ENCODE measurements at regions of chr2 and their contacts with region 1.

Region 1: GRCh38 chr2:64144057-64145013 is at the start of gene PELI1:
- DNase-seq: peak; percentile 82 to 95 (median 88)
- ATAC-seq: peak; percentile 97
- H3K4me3 ChIP-seq: peak within 1 kb of the TSS; percentile 88
- H3K4me3 Mint-ChIP-seq: peak within 1 kb of the TSS in 9 of 10 donors; percentile 87 to 98 (median 93)
- H3K27ac ChIP-seq: peak within 1 kb of the TSS; percentile 98
- H3K27ac Mint-ChIP-seq: peak within 1 kb of the TSS; percentile 93 to 99 (median 96)
- H3K4me1 ChIP-seq: peaks cover 11 to 24% of the 10 kb centered on the region in 2 donors
- H3K4me1 Mint-ChIP-seq: peaks cover 19 to 33% (median 31%) of the 10 kb centered on the region in 7 donors
- H3K27me3 ChIP-seq: no peaks in the 10 kb centered on the region
- H3K27me3 Mint-ChIP-seq: no peaks in the 10 kb centered on the region
- total RNA-seq, gene PELI1: 33.4 to 170 (median 57.2) TPM

Region 2: GRCh38 chr2:63841254-63842022 is 302.9 kb before region 1 on chr2 and contains the start of gene UGP2:
- CTCF ChIA-PET with region 1: no interaction called
- POLR2A ChIA-PET with region 1: no interaction called
- intact Hi-C with region 1: loop called (anchors 1 to 2 kb)
- DNase-seq: peak; percentile 68 to 89 (median 83)
- ATAC-seq: peak; percentile 77
- H3K4me3 ChIP-seq: peak within 1 kb of the TSS; percentile 82
- H3K4me3 Mint-ChIP-seq: peak within 1 kb of the TSS; percentile 97 to 100 (median 99)
- H3K27ac ChIP-seq: peak within 1 kb of the TSS; percentile 90
- H3K27ac Mint-ChIP-seq: peak within 1 kb of the TSS; percentile 95 to 99 (median 97)
- H3K4me1 ChIP-seq: peaks cover 5 to 24% of the 10 kb centered on the region in 2 donors
- H3K4me1 Mint-ChIP-seq: peaks cover 27 to 60% (median 53%) of the 10 kb centered on the region in 7 donors
- H3K27me3 ChIP-seq: no peaks in the 10 kb centered on the region
- H3K27me3 Mint-ChIP-seq: peaks cover 0 to 14% (median 0%) of the 10 kb centered on the region in 5 donors
- total RNA-seq, gene UGP2: 69.5 to 134 (median 92.4) TPM

Region 3: DNA sequence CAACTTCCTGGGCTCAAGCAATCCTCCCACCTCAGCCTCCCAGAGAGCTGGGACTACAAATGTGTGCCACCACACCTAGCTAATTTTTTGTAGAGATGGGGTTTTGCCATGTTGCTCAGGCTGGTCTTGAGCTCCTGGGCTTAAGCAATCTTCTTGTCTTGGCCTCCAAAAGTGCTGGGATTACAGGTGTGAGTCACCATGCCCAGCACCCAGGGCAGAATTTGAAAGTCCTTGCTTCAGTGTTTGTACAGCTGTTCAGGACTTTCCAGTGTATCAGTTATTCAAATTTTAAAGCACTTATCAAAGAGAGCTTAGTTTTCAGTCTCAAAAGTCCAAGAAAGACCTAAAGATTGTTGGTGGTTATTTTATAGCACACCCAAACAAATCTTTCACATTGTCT is 81.5 kb before region 1 on chr2:
- CTCF ChIA-PET with region 1: no interaction called
- POLR2A ChIA-PET with region 1: interaction called, 4 read pairs
- intact Hi-C with region 1: loop called in 1 of 2 experiments (anchors 1 kb)
- DNase-seq: no peak
- ATAC-seq: no peak
- H3K4me3 ChIP-seq: no peak overlapping the region
- H3K4me3 Mint-ChIP-seq: no peak overlapping the region
- H3K27ac ChIP-seq: no peak overlapping the region
- H3K27ac Mint-ChIP-seq: peak overlapping the region in 8 of 9 donors; percentile 83 to 97 (median 92)
- H3K4me1 ChIP-seq: peaks cover 0 to 22% of the 10 kb centered on the region in 2 donors
- H3K4me1 Mint-ChIP-seq: peaks cover 15 to 46% (median 31%) of the 10 kb centered on the region in 7 donors
- H3K27me3 ChIP-seq: no peaks in the 10 kb centered on the region
- H3K27me3 Mint-ChIP-seq: no peaks in the 10 kb centered on the region

Region 4: GRCh38 chr2:64133828-64134227 is 10.5 kb before region 1 on chr2:
- CTCF ChIA-PET with region 1: interaction called, 5 read pairs
- POLR2A ChIA-PET with region 1: interaction called, 25 read pairs
- intact Hi-C with region 1: loop called (anchors 1 kb)
- DNase-seq: no peak
- ATAC-seq: no peak
- H3K4me3 ChIP-seq: no peak overlapping the region
- H3K4me3 Mint-ChIP-seq: peak overlapping the region in 2 of 10 donors; percentile 43 to 59
- H3K27ac ChIP-seq: no peak overlapping the region
- H3K27ac Mint-ChIP-seq: peak overlapping the region in 1 of 9 donors; percentile 68
- H3K4me1 ChIP-seq: peaks cover 4 to 41% of the 10 kb centered on the region in 2 donors
- H3K4me1 Mint-ChIP-seq: peaks cover 46 to 89% (median 85%) of the 10 kb centered on the region in 7 donors
- H3K27me3 ChIP-seq: no peaks in the 10 kb centered on the region
- H3K27me3 Mint-ChIP-seq: no peaks in the 10 kb centered on the region

Region 5: DNA sequence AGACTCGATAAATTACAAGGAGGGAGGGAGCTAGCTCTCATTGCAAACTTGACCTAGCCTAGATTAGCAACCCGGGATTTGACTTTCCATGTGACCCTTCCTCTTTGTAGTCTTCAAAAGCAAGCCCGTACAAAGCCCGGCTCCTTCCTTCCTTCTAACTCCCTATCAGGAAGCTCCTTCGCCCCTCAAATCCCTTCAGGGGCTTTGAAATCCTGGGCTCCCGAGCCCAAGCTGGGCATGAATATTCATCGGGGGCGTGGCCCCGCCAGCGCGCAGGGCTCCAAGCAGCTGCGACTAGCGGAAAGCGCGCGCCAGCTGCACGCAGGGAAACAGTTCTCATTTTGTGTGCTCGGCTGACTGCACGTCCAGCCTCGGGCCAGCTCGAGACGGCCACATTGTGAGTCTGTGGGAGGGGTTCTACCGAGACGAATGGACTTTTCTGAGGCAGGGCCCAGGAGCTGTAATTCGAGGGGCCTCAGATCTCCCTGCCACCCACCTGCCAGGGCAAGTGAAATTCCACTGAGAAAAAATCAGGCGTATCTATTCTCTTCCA is 83.9 kb after region 1 on chr2:
- CTCF ChIA-PET with region 1: no interaction called
- POLR2A ChIA-PET with region 1: interaction called, 7 read pairs
- intact Hi-C with region 1: loop called (anchors 1 to 5 kb)
- DNase-seq: peak in 8 of 9 donors; percentile 38 to 61 (median 57)
- ATAC-seq: peak; percentile 94
- H3K4me3 ChIP-seq: peak overlapping the region; percentile 48
- H3K4me3 Mint-ChIP-seq: peak overlapping the region; percentile 86 to 100 (median 95)
- H3K27ac ChIP-seq: peak overlapping the region; percentile 78
- H3K27ac Mint-ChIP-seq: peak overlapping the region; percentile 83 to 99 (median 95)
- H3K4me1 ChIP-seq: peaks cover 0 to 15% of the 10 kb centered on the region in 2 donors
- H3K4me1 Mint-ChIP-seq: peaks cover 16 to 45% (median 38%) of the 10 kb centered on the region in 7 donors
- H3K27me3 ChIP-seq: no peaks in the 10 kb centered on the region
- H3K27me3 Mint-ChIP-seq: no peaks in the 10 kb centered on the region

Region 6: DNA sequence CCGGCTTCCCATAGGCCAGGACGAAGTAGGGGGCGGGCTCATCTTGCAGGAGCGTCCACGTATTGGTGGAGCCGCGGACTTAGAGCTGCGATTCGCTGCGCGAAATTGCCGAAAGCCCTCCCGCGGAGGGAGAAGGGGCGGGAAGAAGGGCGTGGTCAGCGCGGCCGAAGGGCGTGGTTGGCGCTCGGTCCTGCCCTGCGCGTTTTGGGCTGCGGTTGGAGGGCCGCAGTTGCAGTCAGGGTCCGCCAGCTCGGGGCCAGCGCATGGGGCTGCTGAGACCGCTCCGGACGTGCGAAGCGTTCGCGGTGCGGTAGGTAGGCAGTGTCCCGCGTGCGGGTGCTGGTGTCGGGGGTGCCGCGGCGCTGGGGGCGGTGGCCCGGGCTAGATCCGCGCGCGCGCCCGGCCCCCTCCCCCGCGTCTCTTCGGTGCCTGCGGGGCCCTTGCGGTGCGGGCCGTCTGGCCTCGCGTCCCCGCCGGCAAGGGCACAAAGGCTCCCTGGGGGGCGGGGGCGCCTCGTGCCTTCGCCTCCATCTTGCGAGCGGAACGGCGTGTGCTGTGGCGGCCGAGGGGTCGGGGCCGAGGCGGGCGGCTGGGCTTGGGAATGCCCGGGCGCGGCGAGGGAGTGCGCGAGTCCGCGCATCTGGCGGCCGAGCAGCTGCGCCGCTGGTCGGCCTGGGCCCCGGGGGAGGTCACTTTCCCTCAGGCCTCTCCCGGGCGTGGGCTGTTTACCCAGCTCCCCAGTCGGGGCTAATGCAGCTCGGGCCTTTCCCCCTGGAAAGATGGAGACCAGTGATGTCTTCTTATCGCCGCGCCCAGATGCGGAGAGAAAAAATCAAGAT is 912.1 kb after region 1 on chr2 and contains the start of gene CEP68:
- CTCF ChIA-PET with region 1: no interaction called
- POLR2A ChIA-PET with region 1: no interaction called
- intact Hi-C with region 1: loop called in 1 of 2 experiments (anchors 1 kb)
- DNase-seq: peak; percentile 88 to 96 (median 95)
- ATAC-seq: peak; percentile 96
- H3K4me3 ChIP-seq: peak within 1 kb of the TSS; percentile 54
- H3K4me3 Mint-ChIP-seq: peak within 1 kb of the TSS; percentile 79 to 99 (median 94)
- H3K27ac ChIP-seq: peak within 1 kb of the TSS; percentile 76
- H3K27ac Mint-ChIP-seq: peak within 1 kb of the TSS; percentile 84 to 97 (median 90)
- H3K4me1 ChIP-seq: peaks cover 10 to 42% of the 10 kb centered on the region in 2 donors
- H3K4me1 Mint-ChIP-seq: peaks cover 41 to 81% (median 61%) of the 10 kb centered on the region in 7 donors
- H3K27me3 ChIP-seq: no peaks in the 10 kb centered on the region
- H3K27me3 Mint-ChIP-seq: peaks cover 0 to 2% (median 0%) of the 10 kb centered on the region in 5 donors
- total RNA-seq, gene CEP68: 8.5 to 52.0 (median 20.8) TPM